ENCODE measurements at regions of chr15 and their contacts with region 1.

Region 1: GRCh38 chr15:51776952-51777574 is 25.7 kb downstream of the TMOD2 start:
- DNase-seq: peak in 8 of 9 donors; percentile 37 to 74 (median 64)
- ATAC-seq: peak; percentile 86
- H3K4me3 ChIP-seq: no peak overlapping the region
- H3K4me3 Mint-ChIP-seq: no peak overlapping the region
- H3K27ac ChIP-seq: no peak overlapping the region
- H3K27ac Mint-ChIP-seq: no peak overlapping the region
- H3K4me1 ChIP-seq: no peaks in the 10 kb centered on the region
- H3K4me1 Mint-ChIP-seq: peaks cover 0 to 12% (median 6%) of the 10 kb centered on the region in 7 donors
- H3K27me3 ChIP-seq: no peaks in the 10 kb centered on the region
- H3K27me3 Mint-ChIP-seq: no peaks in the 10 kb centered on the region

Region 2: GRCh38 chr15:51505251-51505650 is 271.8 kb before region 1 on chr15:
- CTCF ChIA-PET with region 1: no interaction called
- POLR2A ChIA-PET with region 1: no interaction called
- intact Hi-C with region 1: no loop called
- DNase-seq: no peak
- ATAC-seq: no peak
- H3K4me3 ChIP-seq: no peak overlapping the region
- H3K4me3 Mint-ChIP-seq: no peak overlapping the region
- H3K27ac ChIP-seq: no peak overlapping the region
- H3K27ac Mint-ChIP-seq: no peak overlapping the region
- H3K4me1 ChIP-seq: no peaks in the 10 kb centered on the region
- H3K4me1 Mint-ChIP-seq: no peaks in the 10 kb centered on the region
- H3K27me3 ChIP-seq: no peaks in the 10 kb centered on the region
- H3K27me3 Mint-ChIP-seq: peaks cover 0 to 2% (median 0%) of the 10 kb centered on the region in 5 donors

Region 3: DNA sequence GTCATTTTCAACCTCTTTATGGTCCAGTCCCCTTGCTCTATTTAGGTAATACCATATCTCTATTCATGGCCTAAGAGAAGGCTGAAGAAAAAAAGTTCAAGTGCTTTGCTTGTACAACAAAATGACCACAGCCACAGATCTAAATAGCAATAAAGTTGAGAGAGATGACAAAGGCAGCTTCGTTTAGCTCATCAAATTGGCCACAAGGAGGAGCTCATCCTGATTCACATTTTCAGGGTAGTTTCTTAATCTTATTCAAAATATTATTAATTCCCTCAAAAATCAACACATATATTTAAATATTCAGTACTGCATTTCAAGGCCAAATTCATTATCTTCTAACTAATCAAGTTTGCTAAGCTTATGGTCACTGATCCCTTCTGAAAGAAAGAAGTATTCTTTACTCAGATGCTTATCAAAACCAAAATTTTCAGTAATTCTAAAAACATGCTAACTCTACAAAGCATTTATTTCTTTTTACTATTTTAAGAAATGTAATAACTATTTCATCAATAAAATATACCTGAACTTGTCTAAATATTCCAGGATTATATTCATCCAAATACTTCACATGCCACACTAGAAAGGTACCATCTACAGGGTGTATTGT is 240.0 kb before region 1 on chr15:
- CTCF ChIA-PET with region 1: no interaction called
- POLR2A ChIA-PET with region 1: no interaction called
- intact Hi-C with region 1: loop called (anchors 5 to 10 kb)
- DNase-seq: no peak
- ATAC-seq: no peak
- H3K4me3 ChIP-seq: no peak overlapping the region
- H3K4me3 Mint-ChIP-seq: no peak overlapping the region
- H3K27ac ChIP-seq: no peak overlapping the region
- H3K27ac Mint-ChIP-seq: no peak overlapping the region
- H3K4me1 ChIP-seq: no peaks in the 10 kb centered on the region
- H3K4me1 Mint-ChIP-seq: peaks cover 0 to 2% (median 0%) of the 10 kb centered on the region in 7 donors
- H3K27me3 ChIP-seq: no peaks in the 10 kb centered on the region
- H3K27me3 Mint-ChIP-seq: peaks cover 0 to 5% (median 0%) of the 10 kb centered on the region in 5 donors

Region 4: DNA sequence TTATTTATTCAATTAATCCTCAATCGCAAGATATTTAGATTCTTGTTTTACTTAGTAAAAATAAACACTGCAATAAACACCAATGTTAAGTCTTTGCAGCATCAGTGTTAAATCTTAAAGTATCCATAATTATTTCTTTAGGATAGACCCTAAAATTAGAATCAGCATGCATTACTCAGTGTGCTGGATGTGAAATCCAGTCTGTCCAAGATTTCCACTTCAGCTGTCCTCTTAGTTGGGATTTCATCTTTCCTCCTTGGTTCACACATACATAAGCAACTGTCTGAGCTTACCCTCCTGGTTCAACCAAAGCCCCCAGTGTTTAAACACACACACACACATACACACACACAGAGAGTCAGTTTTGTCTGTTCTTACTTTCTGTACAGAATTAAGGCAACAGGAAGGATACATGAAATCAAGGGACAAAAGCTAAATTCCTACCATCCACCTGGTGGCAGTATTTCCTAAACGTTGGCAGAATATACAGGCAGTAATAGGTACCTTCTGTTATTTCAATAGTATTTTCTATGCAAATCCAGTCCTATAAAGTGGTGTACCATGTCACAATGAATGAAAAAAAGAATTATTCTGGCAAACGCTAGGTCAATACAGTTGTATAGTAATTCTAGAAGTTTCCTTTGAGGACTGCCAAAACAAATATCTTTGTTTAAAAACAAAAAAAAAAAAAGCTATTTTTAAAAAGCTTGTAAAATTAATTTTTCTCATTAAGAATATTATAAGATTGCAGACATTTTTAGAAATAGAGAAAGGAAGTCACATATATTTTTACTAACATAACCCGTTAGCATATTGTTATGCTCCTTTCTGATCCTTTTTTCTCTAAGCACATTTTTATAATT is 127.2 kb before region 1 on chr15:
- CTCF ChIA-PET with region 1: interaction called, 117 read pairs
- POLR2A ChIA-PET with region 1: interaction called, 13 read pairs
- intact Hi-C with region 1: loop called (anchors 1 kb)
- DNase-seq: peak in 7 of 9 donors; percentile 53 to 76 (median 68)
- ATAC-seq: peak; percentile 86
- H3K4me3 ChIP-seq: no peak overlapping the region
- H3K4me3 Mint-ChIP-seq: no peak overlapping the region
- H3K27ac ChIP-seq: no peak overlapping the region
- H3K27ac Mint-ChIP-seq: no peak overlapping the region
- H3K4me1 ChIP-seq: no peaks in the 10 kb centered on the region
- H3K4me1 Mint-ChIP-seq: no peaks in the 10 kb centered on the region
- H3K27me3 ChIP-seq: no peaks in the 10 kb centered on the region
- H3K27me3 Mint-ChIP-seq: peaks cover 0 to 17% (median 0%) of the 10 kb centered on the region in 5 donors

Region 5: GRCh38 chr15:51658670-51659069 is 118.4 kb before region 1 on chr15:
- CTCF ChIA-PET with region 1: interaction called, 10 read pairs
- POLR2A ChIA-PET with region 1: no interaction called
- intact Hi-C with region 1: no loop called
- DNase-seq: no peak
- ATAC-seq: no peak
- H3K4me3 ChIP-seq: no peak overlapping the region
- H3K4me3 Mint-ChIP-seq: no peak overlapping the region
- H3K27ac ChIP-seq: no peak overlapping the region
- H3K27ac Mint-ChIP-seq: no peak overlapping the region
- H3K4me1 ChIP-seq: no peaks in the 10 kb centered on the region
- H3K4me1 Mint-ChIP-seq: no peaks in the 10 kb centered on the region
- H3K27me3 ChIP-seq: no peaks in the 10 kb centered on the region
- H3K27me3 Mint-ChIP-seq: peaks cover 0 to 12% (median 0%) of the 10 kb centered on the region in 5 donors

Region 6: DNA sequence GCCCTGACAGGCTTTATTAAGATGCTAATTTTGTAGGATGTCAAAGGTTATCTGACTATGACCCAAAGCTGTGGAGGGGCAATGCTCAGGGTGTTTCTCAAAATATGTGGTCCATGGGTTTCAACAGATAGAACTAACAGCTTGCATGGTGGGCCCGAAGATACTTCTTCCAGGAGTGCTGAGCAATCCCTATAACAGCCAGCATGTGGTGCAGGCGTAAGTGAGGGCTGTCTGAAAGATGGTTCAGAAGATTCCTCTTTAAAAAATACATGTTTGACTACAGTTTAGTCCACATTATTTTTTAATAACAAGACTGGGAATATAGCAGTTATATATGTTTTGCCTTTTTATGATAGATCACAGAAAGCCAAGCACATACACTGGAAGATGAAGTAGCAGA is 88.2 kb before region 1 on chr15:
- CTCF ChIA-PET with region 1: interaction called, 5 read pairs
- POLR2A ChIA-PET with region 1: no interaction called
- intact Hi-C with region 1: loop called in 1 of 2 experiments (anchors 1 kb)
- DNase-seq: no peak
- ATAC-seq: no peak
- H3K4me3 ChIP-seq: no peak overlapping the region
- H3K4me3 Mint-ChIP-seq: no peak overlapping the region
- H3K27ac ChIP-seq: no peak overlapping the region
- H3K27ac Mint-ChIP-seq: no peak overlapping the region
- H3K4me1 ChIP-seq: peaks cover 0 to 11% of the 10 kb centered on the region in 2 donors
- H3K4me1 Mint-ChIP-seq: peaks cover 9 to 27% (median 20%) of the 10 kb centered on the region in 7 donors
- H3K27me3 ChIP-seq: no peaks in the 10 kb centered on the region
- H3K27me3 Mint-ChIP-seq: peaks cover 26 to 81% (median 31%) of the 10 kb centered on the region in 5 donors

Region 7: GRCh38 chr15:51750792-51751685 is 26.0 kb before region 1 on chr15 and contains the start of gene TMOD2:
- CTCF ChIA-PET with region 1: interaction called, 5 read pairs
- POLR2A ChIA-PET with region 1: no interaction called
- intact Hi-C with region 1: loop called in 1 of 2 experiments (anchors 2 kb)
- DNase-seq: peak in 8 of 9 donors; percentile 40 to 66 (median 46)
- ATAC-seq: peak; percentile 90
- H3K4me3 ChIP-seq: peak within 1 kb of the TSS; percentile 55
- H3K4me3 Mint-ChIP-seq: peak within 1 kb of the TSS; percentile 84 to 91 (median 87)
- H3K27ac ChIP-seq: no peak within 1 kb of the TSS
- H3K27ac Mint-ChIP-seq: peak within 1 kb of the TSS in 7 of 9 donors; percentile 32 to 84 (median 80)
- H3K4me1 ChIP-seq: peaks cover 0 to 10% of the 10 kb centered on the region in 2 donors
- H3K4me1 Mint-ChIP-seq: peaks cover 24 to 51% (median 42%) of the 10 kb centered on the region in 7 donors
- H3K27me3 ChIP-seq: no peaks in the 10 kb centered on the region
- H3K27me3 Mint-ChIP-seq: peaks cover 0 to 60% (median 4%) of the 10 kb centered on the region in 5 donors
- total RNA-seq, gene TMOD2: 9.5 to 17.1 (median 13.4) TPM

Region 8: DNA sequence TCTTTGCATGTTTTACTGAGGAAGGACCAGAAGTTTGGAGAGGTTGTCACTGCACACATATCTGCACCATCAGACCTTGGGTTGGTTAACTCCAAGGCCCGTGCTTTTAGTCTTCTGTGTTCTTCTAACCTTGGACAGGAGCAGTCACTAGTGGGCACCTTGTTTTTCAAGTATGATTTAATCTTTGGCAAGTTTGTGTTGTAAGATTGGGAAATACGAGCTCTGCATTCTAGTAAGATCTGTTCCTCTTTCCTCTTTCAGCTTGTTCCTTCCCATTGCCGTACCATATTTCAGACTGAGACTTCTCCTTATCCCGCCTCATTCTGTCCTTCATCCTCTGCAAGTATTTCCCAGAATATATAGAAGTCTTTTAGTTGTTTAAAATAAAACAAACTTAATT is 20.6 kb before region 1 on chr15:
- CTCF ChIA-PET with region 1: interaction called, 14 read pairs
- POLR2A ChIA-PET with region 1: no interaction called
- intact Hi-C with region 1: loop called in 1 of 2 experiments (anchors 2 kb)
- DNase-seq: no peak
- ATAC-seq: peak; percentile 44
- H3K4me3 ChIP-seq: no peak overlapping the region
- H3K4me3 Mint-ChIP-seq: no peak overlapping the region
- H3K27ac ChIP-seq: no peak overlapping the region
- H3K27ac Mint-ChIP-seq: no peak overlapping the region
- H3K4me1 ChIP-seq: peaks cover 0 to 10% of the 10 kb centered on the region in 2 donors
- H3K4me1 Mint-ChIP-seq: peaks cover 19 to 49% (median 38%) of the 10 kb centered on the region in 7 donors
- H3K27me3 ChIP-seq: no peaks in the 10 kb centered on the region
- H3K27me3 Mint-ChIP-seq: peaks cover 0 to 30% (median 0%) of the 10 kb centered on the region in 5 donors

Measured in naive thymus-derived CD4-positive, alpha-beta T cell (primary cell).